CD4-positive, alpha-beta T cell (primary cell): ENCODE measurements at regions of chr11 and their contacts with region 1.

Region 1: GRCh38 chr11:10792398-10792975 is 16.2 kb downstream of the EIF4G2 start:
- DNase-seq: peak; percentile 72 to 90 (median 80)
- ATAC-seq: peak; percentile 85
- H3K4me3 ChIP-seq: no peak overlapping the region
- H3K4me3 Mint-ChIP-seq: no peak overlapping the region
- H3K27ac ChIP-seq: no peak overlapping the region
- H3K27ac Mint-ChIP-seq: no peak overlapping the region
- H3K4me1 ChIP-seq: peaks cover 19% of the 10 kb centered on the region
- H3K4me1 Mint-ChIP-seq: peaks cover 32% of the 10 kb centered on the region
- H3K27me3 ChIP-seq: no peaks in the 10 kb centered on the region
- H3K27me3 Mint-ChIP-seq: no peaks in the 10 kb centered on the region
- CTCF ChIP-seq: peak; percentile 95

Region 2: GRCh38 chr11:10803676-10804075 is 11.2 kb after region 1 on chr11:
- CTCF ChIA-PET with region 1: interaction called, 19 read pairs
- POLR2A ChIA-PET with region 1: interaction called, 62 read pairs
- intact Hi-C with region 1: loop called in 1 of 2 experiments (anchors 2 kb)
- DNase-seq: no peak
- ATAC-seq: no peak
- H3K4me3 ChIP-seq: no peak overlapping the region
- H3K4me3 Mint-ChIP-seq: peak overlapping the region; percentile 11
- H3K27ac ChIP-seq: no peak overlapping the region
- H3K27ac Mint-ChIP-seq: peak overlapping the region; percentile 100
- H3K4me1 ChIP-seq: peaks cover 54% of the 10 kb centered on the region
- H3K4me1 Mint-ChIP-seq: peaks cover 87% of the 10 kb centered on the region
- H3K27me3 ChIP-seq: no peaks in the 10 kb centered on the region
- H3K27me3 Mint-ChIP-seq: no peaks in the 10 kb centered on the region
- CTCF ChIP-seq: no peak

Region 3: GRCh38 chr11:10899121-10899830 is 106.8 kb after region 1 on chr11:
- CTCF ChIA-PET with region 1: interaction called, 10 read pairs
- POLR2A ChIA-PET with region 1: no interaction called
- intact Hi-C with region 1: no loop called
- DNase-seq: peak in 3 of 14 experiments; percentile 8 to 38 (median 31)
- ATAC-seq: no peak
- H3K4me3 ChIP-seq: no peak overlapping the region
- H3K4me3 Mint-ChIP-seq: no peak overlapping the region
- H3K27ac ChIP-seq: no peak overlapping the region
- H3K27ac Mint-ChIP-seq: peak overlapping the region; percentile 22
- H3K4me1 ChIP-seq: peaks cover 10% of the 10 kb centered on the region
- H3K4me1 Mint-ChIP-seq: peaks cover 6% of the 10 kb centered on the region
- H3K27me3 ChIP-seq: no peaks in the 10 kb centered on the region
- H3K27me3 Mint-ChIP-seq: no peaks in the 10 kb centered on the region
- CTCF ChIP-seq: no peak

Region 4: DNA sequence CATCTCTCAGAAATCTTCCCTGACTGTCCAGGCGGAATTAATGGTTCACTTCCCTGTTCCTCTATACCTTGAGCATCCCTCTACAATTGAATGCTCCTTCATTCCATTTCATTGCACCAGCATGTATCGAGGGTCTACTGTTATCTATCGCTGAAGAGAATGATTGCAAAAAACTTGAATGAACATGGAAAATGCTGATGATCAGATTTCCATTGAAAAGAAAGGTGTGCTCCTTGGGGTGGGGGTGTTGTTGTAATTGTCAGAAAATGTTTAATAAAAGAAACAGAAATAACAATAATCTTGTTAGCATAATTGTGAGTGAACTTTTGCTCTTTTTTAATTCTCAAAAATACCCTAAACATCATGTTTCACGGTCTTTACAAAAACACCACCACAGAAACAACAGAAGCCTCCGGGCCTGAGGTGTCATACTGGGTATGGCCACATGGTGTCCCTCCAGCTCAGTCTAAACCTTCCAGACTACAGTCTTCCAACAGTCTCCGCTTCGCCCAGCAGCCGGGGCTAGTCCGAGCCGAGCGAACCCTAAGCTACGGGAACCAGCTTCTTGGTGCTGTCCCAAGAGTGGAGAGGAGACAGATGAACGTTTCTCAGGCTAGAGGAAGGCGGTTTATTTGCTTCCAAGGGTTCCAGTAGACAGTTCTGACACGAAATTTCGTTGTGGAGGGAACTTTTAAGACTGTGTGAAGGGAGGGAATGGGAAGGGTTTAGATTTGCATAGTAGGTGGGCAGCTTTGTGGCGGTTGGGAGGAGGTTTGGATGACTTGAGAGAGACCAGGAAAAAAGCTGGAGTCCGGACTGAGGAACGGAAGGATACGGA is 141.2 kb after region 1 on chr11:
- CTCF ChIA-PET with region 1: interaction called, 14 read pairs
- POLR2A ChIA-PET with region 1: interaction called, 3 read pairs
- intact Hi-C with region 1: loop called in 1 of 2 experiments (anchors 2 kb)
- DNase-seq: peak; percentile 67 to 90 (median 80)
- ATAC-seq: peak; percentile 89
- H3K4me3 ChIP-seq: peak overlapping the region; percentile 56
- H3K4me3 Mint-ChIP-seq: peak overlapping the region; percentile 90
- H3K27ac ChIP-seq: no peak overlapping the region
- H3K27ac Mint-ChIP-seq: peak overlapping the region; percentile 52
- H3K4me1 ChIP-seq: peaks cover 24% of the 10 kb centered on the region
- H3K4me1 Mint-ChIP-seq: peaks cover 24% of the 10 kb centered on the region
- H3K27me3 ChIP-seq: peaks cover 25 to 31% of the 10 kb centered on the region in 2 experiments
- H3K27me3 Mint-ChIP-seq: peaks cover 49% of the 10 kb centered on the region
- CTCF ChIP-seq: peak; percentile 94

Region 5: GRCh38 chr11:11157185-11157584 is 364.7 kb after region 1 on chr11:
- CTCF ChIA-PET with region 1: no interaction called
- POLR2A ChIA-PET with region 1: interaction called, 3 read pairs
- intact Hi-C with region 1: loop called in 1 of 2 experiments (anchors 5 kb)
- DNase-seq: peak; percentile 50 to 84 (median 70)
- ATAC-seq: peak; percentile 67
- H3K4me3 ChIP-seq: no peak overlapping the region
- H3K4me3 Mint-ChIP-seq: peak overlapping the region; percentile 71
- H3K27ac ChIP-seq: no peak overlapping the region
- H3K27ac Mint-ChIP-seq: peak overlapping the region; percentile 92
- H3K4me1 ChIP-seq: peaks cover 33% of the 10 kb centered on the region
- H3K4me1 Mint-ChIP-seq: peaks cover 48% of the 10 kb centered on the region
- H3K27me3 ChIP-seq: no peaks in the 10 kb centered on the region
- H3K27me3 Mint-ChIP-seq: peaks cover 4% of the 10 kb centered on the region
- CTCF ChIP-seq: peak; percentile 80

Region 6: GRCh38 chr11:11787305-11788062 is 995.0 kb after region 1 on chr11:
- CTCF ChIA-PET with region 1: interaction called, 14 read pairs
- POLR2A ChIA-PET with region 1: no interaction called
- intact Hi-C with region 1: loop called (anchors 1 kb)
- DNase-seq: peak; percentile 54 to 83 (median 65)
- ATAC-seq: peak; percentile 88
- H3K4me3 ChIP-seq: no peak overlapping the region
- H3K4me3 Mint-ChIP-seq: no peak overlapping the region
- H3K27ac ChIP-seq: no peak overlapping the region
- H3K27ac Mint-ChIP-seq: no peak overlapping the region
- H3K4me1 ChIP-seq: no peaks in the 10 kb centered on the region
- H3K4me1 Mint-ChIP-seq: no peaks in the 10 kb centered on the region
- H3K27me3 ChIP-seq: no peaks in the 10 kb centered on the region
- H3K27me3 Mint-ChIP-seq: peaks cover 6% of the 10 kb centered on the region
- CTCF ChIP-seq: peak; percentile 92